ENCODE measurements at regions of chr5 and their contacts with region 1.

Region 1: GRCh38 chr5:145697251-145697990 is 137.7 kb downstream of the PRELID2 start:
- DNase-seq: no peak
- ATAC-seq: no peak
- H3K4me3 ChIP-seq: no peak overlapping the region
- H3K27ac ChIP-seq: no peak overlapping the region
- H3K4me1 ChIP-seq: peaks cover 0 to 7% (median 0%) of the 10 kb centered on the region in 12 donors
- H3K27me3 ChIP-seq: no peaks in the 10 kb centered on the region
- CTCF ChIP-seq: peak in 11 of 12 donors; percentile 18 to 51 (median 36)
- POLR2A ChIP-seq: no peak

Region 2: DNA sequence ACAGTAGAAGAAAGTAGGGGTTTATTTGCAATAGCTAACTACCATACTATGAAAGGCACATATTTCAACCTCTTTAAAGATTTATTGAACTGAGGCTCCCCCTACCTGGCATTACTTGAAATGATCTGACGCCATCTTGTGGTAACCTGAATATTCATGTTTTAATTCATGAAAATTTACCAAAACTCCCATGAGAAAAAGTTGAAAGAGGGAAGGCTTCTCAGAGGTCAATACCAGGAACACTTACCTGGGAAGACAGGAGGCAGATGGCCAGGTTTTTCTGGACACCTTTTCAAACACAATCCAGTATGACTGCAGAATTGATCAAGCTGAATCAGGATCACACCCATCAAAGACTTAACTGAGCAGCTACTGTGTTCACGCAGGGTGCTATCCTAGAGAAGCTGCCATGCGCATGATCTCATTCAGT is 128.3 kb after region 1 on chr5:
- intact Hi-C with region 1: loop called in 1 of 10 experiments (anchors 5 kb)
- DNase-seq: no peak
- ATAC-seq: peak in 1 of 4 donors; percentile 50
- H3K4me3 ChIP-seq: no peak overlapping the region
- H3K27ac ChIP-seq: no peak overlapping the region
- H3K4me1 ChIP-seq: peaks cover 0 to 8% (median 5%) of the 10 kb centered on the region in 12 donors
- H3K27me3 ChIP-seq: no peaks in the 10 kb centered on the region
- CTCF ChIP-seq: peak; percentile 53 to 87 (median 69)
- POLR2A ChIP-seq: no peak

Region 3: DNA sequence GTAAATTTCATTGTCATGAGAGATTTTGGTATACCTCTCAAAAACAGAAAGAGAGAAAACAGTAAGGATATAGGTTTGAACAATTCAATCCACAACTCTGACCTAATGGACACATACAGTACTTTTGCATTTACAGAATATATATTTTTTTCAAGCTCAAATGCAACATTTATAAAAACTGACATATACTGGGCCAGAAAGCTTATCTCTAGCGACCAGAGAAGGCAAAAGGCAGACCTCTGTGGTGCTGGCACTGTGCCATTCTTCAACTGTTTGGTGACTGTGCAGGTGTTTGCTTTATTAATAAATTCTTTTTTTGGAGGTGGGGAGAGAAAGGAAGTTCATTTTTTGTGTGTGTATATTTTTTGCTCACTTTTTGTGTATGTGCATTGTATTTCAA is 414.0 kb after region 1 on chr5:
- intact Hi-C with region 1: loop called in 1 of 10 experiments (anchors 10 kb)
- DNase-seq: no peak
- ATAC-seq: no peak
- H3K4me3 ChIP-seq: no peak overlapping the region
- H3K27ac ChIP-seq: no peak overlapping the region
- H3K4me1 ChIP-seq: peaks cover 0 to 4% (median 0%) of the 10 kb centered on the region in 12 donors
- H3K27me3 ChIP-seq: no peaks in the 10 kb centered on the region
- CTCF ChIP-seq: no peak
- POLR2A ChIP-seq: no peak

Region 4: DNA sequence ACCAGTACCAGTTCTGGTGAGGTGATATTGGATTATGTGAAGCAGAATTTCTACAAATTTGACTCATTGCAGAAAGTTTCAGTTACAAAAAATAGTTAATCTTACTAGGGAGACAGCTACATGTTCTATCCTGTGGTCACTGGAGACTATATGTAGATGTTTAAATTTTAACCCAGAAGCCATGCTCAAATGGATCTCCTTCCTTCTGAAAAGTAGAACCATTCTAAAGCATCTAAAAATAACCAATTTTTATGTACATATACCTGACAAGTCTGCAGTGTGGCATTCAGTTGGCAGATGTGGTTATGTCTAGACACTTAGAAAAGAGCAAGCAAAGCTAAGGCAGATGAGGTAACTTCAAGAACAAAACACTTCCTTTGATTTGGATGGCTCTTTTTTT is 575.7 kb after region 1 on chr5:
- intact Hi-C with region 1: no loop called
- DNase-seq: no peak
- ATAC-seq: no peak
- H3K4me3 ChIP-seq: no peak overlapping the region
- H3K27ac ChIP-seq: no peak overlapping the region
- H3K4me1 ChIP-seq: no peaks in the 10 kb centered on the region
- H3K27me3 ChIP-seq: no peaks in the 10 kb centered on the region
- CTCF ChIP-seq: no peak
- POLR2A ChIP-seq: no peak